ENCODE measurements at regions of chr18 and their contacts with region 1.

Region 1: GRCh38 chr18:49849331-49850217 is 36.2 kb upstream of the ACAA2 start:
- DNase-seq: peak; percentile 83

Region 2: GRCh38 chr18:49510393-49511115 is 339.0 kb before region 1 on chr18:
- intact Hi-C with region 1: loop called in 1 of 2 experiments (anchors 5 kb)
- DNase-seq: peak; percentile 76

Region 3: GRCh38 chr18:49778971-49779461 is 70.6 kb before region 1 on chr18:
- intact Hi-C with region 1: loop called in 1 of 2 experiments (anchors 5 kb)
- DNase-seq: no peak